ENCODE measurements at regions of chr3 and their contacts with region 1.

Region 1: DNA sequence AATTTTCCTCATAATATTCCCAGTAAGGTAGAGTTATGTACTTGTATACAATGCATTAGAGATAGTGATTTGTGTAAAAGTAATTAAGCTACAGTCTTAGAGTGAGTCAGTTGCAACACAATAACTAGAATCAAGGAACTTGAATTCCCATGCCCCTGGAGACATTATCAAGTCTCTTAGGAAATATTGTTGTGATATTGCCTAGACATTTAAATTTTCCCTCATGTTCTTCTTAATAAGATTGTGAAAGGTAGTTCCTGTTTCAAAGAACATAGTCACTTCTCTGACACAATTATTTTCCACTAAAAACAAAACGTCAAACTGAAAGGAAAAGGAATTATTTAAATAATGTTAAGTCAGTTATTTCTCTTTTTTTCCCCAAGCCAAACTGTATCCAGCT is 13.0 kb upstream of the ATP1B3 start:
- DNase-seq: no peak
- ATAC-seq: no peak
- H3K4me3 ChIP-seq: no peak overlapping the region
- H3K27ac ChIP-seq: no peak overlapping the region
- H3K4me1 ChIP-seq: no peaks in the 10 kb centered on the region
- H3K27me3 ChIP-seq: no peaks in the 10 kb centered on the region
- CTCF ChIP-seq: no peak

Region 2: DNA sequence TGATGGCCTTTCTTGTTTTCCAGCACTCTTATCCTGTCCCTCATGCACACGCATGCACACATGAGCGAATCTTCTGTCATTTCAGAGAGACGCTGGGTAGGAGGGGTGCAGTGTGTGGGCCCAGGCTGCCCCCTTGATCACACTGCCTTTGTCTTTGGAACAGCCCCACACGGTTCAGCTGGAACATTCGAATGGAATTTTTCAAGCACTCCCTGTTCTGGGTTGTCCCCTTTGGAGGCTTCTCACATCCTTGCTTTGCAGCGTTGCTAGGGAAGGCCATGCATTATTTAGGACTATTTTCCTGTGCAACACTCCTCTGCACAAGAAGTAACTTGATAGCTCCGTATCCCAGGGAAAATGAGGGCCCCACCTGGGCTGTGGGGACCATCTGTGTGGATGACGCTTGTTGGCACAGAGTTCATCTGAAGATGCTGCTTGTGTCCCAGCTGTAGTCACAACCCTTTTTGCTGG is 733.9 kb before region 1 on chr3:
- CTCF ChIA-PET with region 1: no interaction called
- POLR2A ChIA-PET with region 1: interaction called, 15 read pairs
- in situ Hi-C with region 1: no loop called
- intact Hi-C with region 1: no loop called
- DNase-seq: no peak
- ATAC-seq: no peak
- H3K4me3 ChIP-seq: no peak overlapping the region
- H3K27ac ChIP-seq: no peak overlapping the region
- H3K4me1 ChIP-seq: no peaks in the 10 kb centered on the region
- H3K27me3 ChIP-seq: peaks cover 9% of the 10 kb centered on the region
- CTCF ChIP-seq: no peak

Region 3: GRCh38 chr3:141412087-141412935 is 451.2 kb before region 1 on chr3:
- CTCF ChIA-PET with region 1: no interaction called
- POLR2A ChIA-PET with region 1: interaction called, 10 read pairs
- in situ Hi-C with region 1: no loop called
- intact Hi-C with region 1: no loop called
- DNase-seq: no peak
- ATAC-seq: peak; percentile 68
- H3K4me3 ChIP-seq: peak overlapping the region; percentile 20 to 31
- H3K27ac ChIP-seq: peak overlapping the region; percentile 89
- H3K4me1 ChIP-seq: peaks cover 39% of the 10 kb centered on the region
- H3K27me3 ChIP-seq: no peaks in the 10 kb centered on the region
- CTCF ChIP-seq: no peak

Measured in Panc1 (cell line).